ENCODE measurements at regions of chr19 and their contacts with region 1.

Region 1: GRCh38 chr19:29771708-29772414 is 39.9 kb upstream of the CCNE1 start:
- DNase-seq: peak; percentile 78 to 97
- ATAC-seq: peak; percentile 95 to 96
- H3K4me3 ChIP-seq: no peak overlapping the region
- H3K27ac ChIP-seq: 0 out of 6 replicates have a peak overlapping the region, but pooled peaks of 1 of the 2 experiments have one; percentile 24
- H3K4me1 ChIP-seq: peaks cover 3% of the 10 kb centered on the region; the same call in 1 of the 3 replicates
- CTCF ChIP-seq: peak; percentile 89
- EP300 ChIP-seq: no peak
- POLR2A ChIP-seq: no peak
- RAD21 ChIP-seq: peak; percentile 72 to 77

Region 2: GRCh38 chr19:29745253-29745652 is 26.6 kb before region 1 on chr19:
- CTCF ChIA-PET with region 1: interaction called, 243 read pairs
- POLR2A ChIA-PET with region 1: no interaction called
- DNase-seq: no peak
- ATAC-seq: peak; percentile 81 to 93
- H3K4me3 ChIP-seq: no peak overlapping the region
- H3K27ac ChIP-seq: no peak overlapping the region
- H3K4me1 ChIP-seq: no peaks in the 10 kb centered on the region
- CTCF ChIP-seq: peak; percentile 30
- EP300 ChIP-seq: no peak
- POLR2A ChIP-seq: no peak
- RAD21 ChIP-seq: 0 out of 5 replicates have a peak, but pooled peaks of 1 of the 2 experiments have one; percentile 6

Region 3: GRCh38 chr19:29798774-29799497 is 27.1 kb after region 1 on chr19:
- CTCF ChIA-PET with region 1: interaction called, 52 read pairs
- POLR2A ChIA-PET with region 1: no interaction called
- DNase-seq: no peak
- ATAC-seq: peak in 1 of 2 experiments; percentile 32; a peak in 1 of 6 replicates
- H3K4me3 ChIP-seq: no peak overlapping the region
- H3K27ac ChIP-seq: no peak overlapping the region
- H3K4me1 ChIP-seq: no peaks in the 10 kb centered on the region
- CTCF ChIP-seq: no peak
- EP300 ChIP-seq: no peak
- POLR2A ChIP-seq: no peak
- RAD21 ChIP-seq: no peak

Region 4: DNA sequence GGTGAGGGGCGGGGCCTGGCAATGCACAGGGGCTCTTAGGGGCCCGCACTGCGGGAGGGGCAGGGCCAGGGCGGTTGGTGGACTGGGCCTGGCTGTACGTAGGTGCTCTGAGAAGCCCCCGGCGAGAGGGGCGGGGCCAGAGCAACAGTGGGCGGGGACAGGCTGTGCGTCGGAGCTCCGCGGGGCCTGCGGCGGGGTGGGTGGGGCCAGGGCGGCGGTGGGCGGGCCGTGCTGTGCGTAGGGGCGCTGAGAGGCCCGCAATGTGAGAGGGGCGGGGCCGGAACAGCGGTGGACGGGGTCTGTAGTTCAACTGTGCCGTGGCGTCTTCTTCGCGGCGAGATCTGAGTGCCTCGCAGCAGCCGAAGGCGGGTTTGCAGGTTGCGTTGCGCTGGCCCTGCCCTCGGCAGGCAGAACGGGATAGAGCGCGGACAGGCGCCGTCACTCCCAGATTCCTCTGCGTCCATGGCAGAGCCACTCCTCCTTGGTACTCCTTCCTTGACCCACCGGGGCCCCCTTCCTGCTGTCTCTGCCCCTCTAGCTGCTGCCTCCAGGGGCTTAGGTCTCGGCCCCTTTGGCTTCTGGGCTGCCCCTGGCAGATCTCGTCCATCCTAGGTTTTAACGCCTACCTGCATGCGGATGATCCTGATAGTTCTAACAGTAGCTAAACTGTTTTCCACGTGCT is 73.2 kb after region 1 on chr19:
- CTCF ChIA-PET with region 1: interaction called, 11 read pairs
- POLR2A ChIA-PET with region 1: interaction called, 3 read pairs
- DNase-seq: peak; percentile 92 to 99
- ATAC-seq: peak; percentile 78 to 88
- H3K4me3 ChIP-seq: peak overlapping the region; percentile 57
- H3K27ac ChIP-seq: peak overlapping the region; percentile 61 to 84
- H3K4me1 ChIP-seq: peaks cover 20% of the 10 kb centered on the region
- CTCF ChIP-seq: no peak
- EP300 ChIP-seq: no peak
- POLR2A ChIP-seq: peak; percentile 72
- RAD21 ChIP-seq: no peak

Region 5: DNA sequence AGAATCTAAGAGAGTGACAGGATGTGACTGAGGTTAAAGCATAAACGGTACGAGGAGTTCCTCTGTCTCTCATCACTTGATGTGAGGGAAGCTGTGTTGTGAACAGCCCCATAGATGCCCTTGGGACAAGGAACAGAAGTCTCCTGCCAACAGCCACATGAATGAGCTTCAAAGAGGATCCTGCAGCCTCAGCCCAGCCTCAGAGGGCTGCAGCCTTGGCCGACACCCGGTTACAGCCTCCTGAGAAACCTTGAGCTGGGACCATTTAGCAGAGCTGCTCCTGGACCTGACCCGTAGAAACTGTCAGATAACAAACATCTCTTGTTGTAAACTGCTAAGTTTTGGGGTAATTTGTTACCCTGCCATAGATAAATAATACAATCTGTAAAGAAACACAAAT is 94.2 kb after region 1 on chr19:
- CTCF ChIA-PET with region 1: interaction called, 152 read pairs
- POLR2A ChIA-PET with region 1: no interaction called
- DNase-seq: no peak
- ATAC-seq: no peak
- H3K4me3 ChIP-seq: no peak overlapping the region
- H3K27ac ChIP-seq: no peak overlapping the region
- H3K4me1 ChIP-seq: no peaks in the 10 kb centered on the region
- CTCF ChIP-seq: no peak
- EP300 ChIP-seq: no peak
- POLR2A ChIP-seq: no peak
- RAD21 ChIP-seq: no peak

Region 6: GRCh38 chr19:30066781-30067759 is 295.2 kb after region 1 on chr19:
- CTCF ChIA-PET with region 1: no interaction called
- POLR2A ChIA-PET with region 1: no interaction called
- DNase-seq: no peak
- ATAC-seq: no peak
- H3K4me3 ChIP-seq: no peak overlapping the region
- H3K27ac ChIP-seq: no peak overlapping the region
- H3K4me1 ChIP-seq: no peaks in the 10 kb centered on the region
- CTCF ChIP-seq: no peak
- EP300 ChIP-seq: no peak
- POLR2A ChIP-seq: no peak
- RAD21 ChIP-seq: no peak